B cell (primary cell): ENCODE measurements at regions of chr20 and their contacts with region 1.

Region 1: GRCh38 chr20:4720041-4720976 is 1.4 kb upstream of the PRND start:
- DNase-seq: peak; percentile 95
- ATAC-seq: peak; percentile 98
- H3K4me3 ChIP-seq: peak overlapping the region in 2 of 5 experiments; percentile 33 to 38
- H3K4me3 Mint-ChIP-seq: peak overlapping the region; percentile 72
- H3K27ac ChIP-seq: peak overlapping the region; percentile 86 to 89
- H3K27ac Mint-ChIP-seq: peak overlapping the region; percentile 92
- H3K4me1 ChIP-seq: peaks cover 28 to 30% of the 10 kb centered on the region in 2 donors
- H3K4me1 Mint-ChIP-seq: peaks cover 50% of the 10 kb centered on the region
- H3K27me3 ChIP-seq: no peaks in the 10 kb centered on the region
- H3K27me3 Mint-ChIP-seq: no peaks in the 10 kb centered on the region
- CTCF ChIP-seq: peak; percentile 83

Region 2: DNA sequence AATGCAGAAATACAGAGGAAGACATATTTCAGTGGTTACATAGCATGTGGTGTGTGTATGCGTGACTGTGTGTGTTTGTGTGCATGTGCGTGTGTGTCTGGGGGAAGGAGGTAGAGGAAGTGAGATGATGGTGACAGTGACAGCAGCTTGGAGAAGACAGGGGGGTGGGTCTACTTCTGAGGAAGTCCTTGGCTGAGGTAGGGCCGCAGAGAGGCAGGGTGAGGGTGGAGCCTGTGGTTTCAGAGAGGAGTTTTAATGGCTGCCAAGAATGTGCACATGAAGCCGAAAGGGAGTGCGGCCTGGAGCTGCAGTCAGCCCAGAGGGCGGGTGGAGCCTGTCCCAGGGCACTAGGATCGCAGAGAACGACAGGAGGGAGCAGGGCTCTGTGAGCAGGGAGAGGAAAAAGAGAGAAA is 682.3 kb before region 1 on chr20:
- CTCF ChIA-PET with region 1: no interaction called
- POLR2A ChIA-PET with region 1: no interaction called
- intact Hi-C with region 1: no loop called
- DNase-seq: peak; percentile 93
- ATAC-seq: peak; percentile 100
- H3K4me3 ChIP-seq: peak overlapping the region; percentile 16 to 55 (median 34)
- H3K4me3 Mint-ChIP-seq: peak overlapping the region; percentile 82
- H3K27ac ChIP-seq: peak overlapping the region; percentile 54 to 71
- H3K27ac Mint-ChIP-seq: peak overlapping the region; percentile 93
- H3K4me1 ChIP-seq: peaks cover 16 to 17% of the 10 kb centered on the region in 2 donors
- H3K4me1 Mint-ChIP-seq: peaks cover 12% of the 10 kb centered on the region
- H3K27me3 ChIP-seq: no peaks in the 10 kb centered on the region
- H3K27me3 Mint-ChIP-seq: peaks cover 4% of the 10 kb centered on the region
- CTCF ChIP-seq: no peak

Region 3: DNA sequence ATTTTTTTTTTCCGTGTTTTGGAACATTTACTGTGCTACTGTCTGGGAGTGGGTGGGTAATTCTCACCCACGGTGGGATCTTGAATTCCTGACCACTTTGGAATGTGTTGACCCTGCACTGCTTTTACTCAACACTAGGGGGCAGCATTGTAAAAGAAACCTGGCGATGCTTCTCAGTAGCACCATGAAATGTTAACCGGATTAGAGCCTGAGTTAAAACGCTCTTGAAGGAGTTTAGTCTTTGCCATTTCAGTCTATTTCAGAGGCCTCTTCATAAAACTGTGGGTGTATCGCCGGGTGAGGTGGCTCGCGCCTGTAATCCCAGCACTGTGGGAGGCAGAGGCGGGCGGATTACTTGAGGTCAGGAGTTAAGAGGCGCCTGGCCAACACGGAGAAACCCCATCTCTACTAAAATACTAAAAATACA is 113.0 kb before region 1 on chr20:
- CTCF ChIA-PET with region 1: interaction called, 145 read pairs
- POLR2A ChIA-PET with region 1: no interaction called
- intact Hi-C with region 1: loop called (anchors 1 kb)
- DNase-seq: peak; percentile 79
- ATAC-seq: peak; percentile 94
- H3K4me3 ChIP-seq: no peak overlapping the region
- H3K4me3 Mint-ChIP-seq: no peak overlapping the region
- H3K27ac ChIP-seq: no peak overlapping the region
- H3K27ac Mint-ChIP-seq: peak overlapping the region; percentile 32
- H3K4me1 ChIP-seq: peaks cover 5 to 7% of the 10 kb centered on the region in 2 donors
- H3K4me1 Mint-ChIP-seq: peaks cover 12% of the 10 kb centered on the region
- H3K27me3 ChIP-seq: peaks cover 0 to 12% (median 0%) of the 10 kb centered on the region in 4 experiments
- H3K27me3 Mint-ChIP-seq: peaks cover 15% of the 10 kb centered on the region
- CTCF ChIP-seq: peak; percentile 99

Region 4: DNA sequence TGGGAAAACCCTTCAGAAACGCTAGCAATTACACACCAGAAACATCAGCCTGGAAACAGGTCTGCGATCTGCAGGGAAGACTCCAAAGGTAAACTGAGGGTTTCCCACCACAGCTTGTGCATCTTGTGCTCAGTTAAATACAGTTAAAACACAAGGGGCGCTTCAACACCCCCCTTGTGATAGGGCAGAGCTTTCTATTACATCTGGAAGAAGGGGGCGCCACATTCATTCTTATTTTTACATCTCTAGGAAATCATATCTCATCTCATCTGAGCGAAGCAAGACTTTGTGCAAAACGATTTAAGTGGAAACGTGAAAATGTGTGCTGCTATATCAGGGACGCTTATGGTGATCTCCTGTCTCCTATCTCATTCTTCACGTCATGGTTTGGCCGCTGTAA is 59.9 kb after region 1 on chr20:
- CTCF ChIA-PET with region 1: no interaction called
- POLR2A ChIA-PET with region 1: no interaction called
- intact Hi-C with region 1: no loop called
- DNase-seq: no peak
- ATAC-seq: no peak
- H3K4me3 ChIP-seq: no peak overlapping the region
- H3K4me3 Mint-ChIP-seq: no peak overlapping the region
- H3K27ac ChIP-seq: peak overlapping the region in 1 of 2 donors; percentile 63
- H3K27ac Mint-ChIP-seq: peak overlapping the region; percentile 78
- H3K4me1 ChIP-seq: no peaks in the 10 kb centered on the region
- H3K4me1 Mint-ChIP-seq: peaks cover 2% of the 10 kb centered on the region
- H3K27me3 ChIP-seq: no peaks in the 10 kb centered on the region
- H3K27me3 Mint-ChIP-seq: no peaks in the 10 kb centered on the region
- CTCF ChIP-seq: no peak